ENCODE measurements at regions of chr5 and their contacts with region 1.

Region 1: GRCh38 chr5:54229041-54229780 is 81.2 kb downstream of the ARL15 start:
- DNase-seq: no peak
- H3K4me3 ChIP-seq: no peak overlapping the region
- H3K27me3 ChIP-seq: no peaks in the 10 kb centered on the region
- CTCF ChIP-seq: peak; percentile 89

Region 2: GRCh38 chr5:53123702-53124101 is 1105.5 kb before region 1 on chr5:
- CTCF ChIA-PET with region 1: interaction called, 12 read pairs
- POLR2A ChIA-PET with region 1: no interaction called
- DNase-seq: no peak
- H3K4me3 ChIP-seq: no peak overlapping the region
- H3K27me3 ChIP-seq: no peaks in the 10 kb centered on the region; the same call in 1 of the 2 replicates
- CTCF ChIP-seq: no peak

Region 3: DNA sequence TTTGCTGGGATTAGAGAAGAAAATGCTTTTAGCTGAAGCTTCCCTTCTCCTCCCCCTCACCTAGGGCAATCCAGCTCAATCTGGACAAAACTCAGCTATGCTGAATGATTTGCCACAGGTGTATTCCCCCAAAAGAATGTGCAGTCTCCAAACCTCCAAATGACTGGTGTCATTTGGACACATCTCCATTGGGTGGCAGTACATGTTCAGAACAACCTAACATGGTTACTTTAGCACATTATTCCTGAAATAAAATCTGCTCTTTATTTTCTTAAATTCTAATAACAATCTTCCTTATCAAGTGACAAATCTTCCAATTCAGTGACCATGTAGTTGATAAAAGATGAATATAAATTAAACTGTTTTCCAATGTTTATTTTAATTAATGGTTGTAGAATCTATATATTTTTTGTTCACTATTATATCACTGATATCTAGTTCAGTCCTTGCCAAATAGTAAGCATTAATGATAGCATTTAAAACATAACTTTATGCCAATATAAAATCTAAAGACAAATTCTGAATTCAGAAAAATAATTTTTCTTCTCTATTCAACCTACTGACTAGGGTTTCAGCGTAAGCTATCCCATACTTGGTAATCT is 1058.4 kb before region 1 on chr5:
- CTCF ChIA-PET with region 1: interaction called, 15 read pairs
- POLR2A ChIA-PET with region 1: no interaction called
- DNase-seq: no peak
- H3K4me3 ChIP-seq: no peak overlapping the region
- H3K27me3 ChIP-seq: no peaks in the 10 kb centered on the region
- CTCF ChIP-seq: peak; percentile 65

Region 4: GRCh38 chr5:53262348-53262970 is 966.8 kb before region 1 on chr5:
- CTCF ChIA-PET with region 1: interaction called, 13 read pairs
- POLR2A ChIA-PET with region 1: no interaction called
- DNase-seq: no peak
- H3K4me3 ChIP-seq: no peak overlapping the region
- H3K27me3 ChIP-seq: no peaks in the 10 kb centered on the region
- CTCF ChIP-seq: peak; percentile 69

Region 5: GRCh38 chr5:53476531-53477480 is 752.4 kb before region 1 on chr5:
- CTCF ChIA-PET with region 1: interaction called, 12 read pairs
- POLR2A ChIA-PET with region 1: no interaction called
- DNase-seq: no peak
- H3K4me3 ChIP-seq: no peak overlapping the region
- H3K27me3 ChIP-seq: no peaks in the 10 kb centered on the region
- CTCF ChIP-seq: no peak

Region 6: DNA sequence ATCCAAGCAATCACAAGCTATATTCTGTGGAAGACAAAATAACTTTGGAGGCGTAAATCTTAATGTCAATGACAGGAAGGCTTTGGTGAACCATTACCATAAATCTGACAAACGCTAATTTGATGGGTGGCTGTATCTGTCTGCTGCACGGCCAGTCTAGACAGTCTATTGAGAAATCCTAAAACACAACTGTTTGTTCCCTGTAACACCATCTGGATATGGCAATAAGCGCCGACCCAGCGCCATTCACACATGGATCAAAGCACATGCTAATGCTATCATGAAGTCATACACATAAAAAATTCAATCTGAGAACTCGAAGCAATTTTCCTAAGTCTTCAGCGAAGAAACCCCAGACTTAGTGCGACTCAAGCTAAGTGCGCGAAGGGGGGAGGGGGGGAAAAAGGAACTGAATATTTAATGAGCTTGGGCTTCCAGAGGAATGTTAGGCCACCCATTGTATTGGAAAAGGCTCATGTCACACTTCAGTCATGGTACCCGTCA is 13.9 kb before region 1 on chr5:
- CTCF ChIA-PET with region 1: interaction called, 12 read pairs
- POLR2A ChIA-PET with region 1: no interaction called
- DNase-seq: no peak
- H3K4me3 ChIP-seq: no peak overlapping the region
- H3K27me3 ChIP-seq: no peaks in the 10 kb centered on the region
- CTCF ChIP-seq: no peak

Measured in BJ (cell line).